GM12878 (cell line): ENCODE measurements at regions of chr1 and their contacts with region 1.

Region 1: GRCh38 chr1:23825076-23825761 is at the start of gene HMGCL:
- DNase-seq: peak; percentile 55
- ATAC-seq: peak; percentile 99
- H3K4me3 ChIP-seq: peak within 1 kb of the TSS; percentile 83
- H3K27ac ChIP-seq: peak within 1 kb of the TSS; percentile 82
- H3K4me1 ChIP-seq: no peaks in the 10 kb centered on the region
- H3K27me3 ChIP-seq: no peaks in the 10 kb centered on the region
- CTCF ChIP-seq: no peak
- EP300 ChIP-seq: no peak
- POLR2A ChIP-seq: peak; percentile 99
- RAD21 ChIP-seq: no peak
- polyA plus RNA-seq, gene HMGCL: 75.9 to 127 TPM

Region 2: DNA sequence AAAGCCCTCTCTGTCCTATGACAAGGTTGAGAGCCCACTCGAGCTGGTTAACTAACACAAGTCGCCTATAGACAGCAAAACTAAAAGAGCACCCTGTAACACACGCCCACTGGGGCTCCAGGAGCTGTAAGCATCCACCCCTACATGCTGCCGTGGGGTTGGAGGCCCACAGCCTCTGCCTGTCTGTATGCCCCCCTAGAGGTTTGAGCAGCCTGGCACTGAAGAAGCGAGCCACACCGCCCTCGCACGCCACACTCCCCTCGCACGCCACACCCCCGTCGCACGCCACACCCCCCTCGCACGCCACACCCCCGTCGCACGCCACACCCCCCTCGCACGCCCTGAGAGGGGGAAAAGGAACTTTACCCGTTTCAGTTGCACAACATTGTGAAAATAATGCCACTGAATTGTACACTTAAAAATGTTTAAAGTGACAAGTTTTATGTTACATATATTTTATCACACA is 13.2 kb after region 1 on chr1:
- CTCF ChIA-PET with region 1: interaction called, 3 read pairs
- POLR2A ChIA-PET with region 1: interaction called, 13 read pairs
- RAD21 ChIA-PET with region 1: no interaction called
- SMC1A ChIA-PET with region 1: interaction called, 3 read pairs
- in situ Hi-C with region 1: no loop called
- intact Hi-C with region 1: no loop called
- DNase-seq: peak; percentile 28
- ATAC-seq: peak; percentile 100
- H3K4me3 ChIP-seq: peak overlapping the region; percentile 61; the same call in 1 of the 2 replicates
- H3K27ac ChIP-seq: no peak overlapping the region
- H3K4me1 ChIP-seq: no peaks in the 10 kb centered on the region
- H3K27me3 ChIP-seq: no peaks in the 10 kb centered on the region
- CTCF ChIP-seq: 0 out of 6 replicates have a peak, but pooled peaks of 1 of the 3 experiments have one; percentile 1
- EP300 ChIP-seq: no peak
- POLR2A ChIP-seq: 0 out of 2 replicates have a peak, but pooled peaks have one; percentile 38
- RAD21 ChIP-seq: no peak

Region 3: DNA sequence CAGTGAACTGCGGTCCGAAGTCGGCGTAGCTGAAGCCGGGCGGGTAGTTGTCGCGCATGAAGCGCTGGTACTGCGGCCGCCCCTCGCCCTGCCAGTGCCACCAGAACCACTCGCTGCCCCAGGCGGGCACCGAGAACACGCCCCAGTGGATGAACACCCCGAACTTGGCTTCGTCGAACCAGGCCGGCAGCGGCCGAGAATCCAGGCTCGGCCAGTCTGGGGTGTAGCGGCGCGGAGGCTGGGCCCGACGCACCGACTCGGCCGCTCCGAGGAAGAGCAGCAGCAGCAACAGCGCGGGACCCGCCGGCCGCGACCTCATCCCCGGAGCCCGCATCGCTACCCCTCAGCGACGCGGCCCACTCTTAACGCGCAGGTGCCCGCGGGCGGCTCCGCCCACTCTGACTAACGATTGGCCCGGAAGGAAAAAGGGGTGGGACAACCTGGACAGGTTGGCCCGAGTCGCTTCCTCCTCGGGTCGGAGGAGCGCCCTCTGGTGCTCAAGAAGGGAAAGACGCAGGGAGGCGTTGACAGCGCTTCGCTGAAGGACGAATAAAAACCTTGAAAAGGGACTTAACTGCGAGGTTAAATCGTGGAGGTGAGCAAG is 42.8 kb after region 1 on chr1 and contains the start of gene FUCA1:
- CTCF ChIA-PET with region 1: interaction called, 3 read pairs
- POLR2A ChIA-PET with region 1: interaction called, 4 read pairs
- RAD21 ChIA-PET with region 1: interaction called, 4 read pairs
- SMC1A ChIA-PET with region 1: interaction called, 5 read pairs
- in situ Hi-C with region 1: no loop called
- intact Hi-C with region 1: loop called (anchors 1 kb)
- DNase-seq: peak; percentile 72
- ATAC-seq: peak; percentile 92
- H3K4me3 ChIP-seq: peak within 1 kb of the TSS; percentile 77
- H3K27ac ChIP-seq: peak within 1 kb of the TSS; percentile 63
- H3K4me1 ChIP-seq: peaks cover 10% of the 10 kb centered on the region
- H3K27me3 ChIP-seq: no peaks in the 10 kb centered on the region
- CTCF ChIP-seq: peak; percentile 94 to 96 (median 96)
- EP300 ChIP-seq: no peak
- POLR2A ChIP-seq: peak; percentile 91
- RAD21 ChIP-seq: peak; percentile 68
- polyA plus RNA-seq, gene FUCA1: 33.3 to 41.8 TPM